ENCODE measurements at regions of chr15 and their contacts with region 1.

Region 1: DNA sequence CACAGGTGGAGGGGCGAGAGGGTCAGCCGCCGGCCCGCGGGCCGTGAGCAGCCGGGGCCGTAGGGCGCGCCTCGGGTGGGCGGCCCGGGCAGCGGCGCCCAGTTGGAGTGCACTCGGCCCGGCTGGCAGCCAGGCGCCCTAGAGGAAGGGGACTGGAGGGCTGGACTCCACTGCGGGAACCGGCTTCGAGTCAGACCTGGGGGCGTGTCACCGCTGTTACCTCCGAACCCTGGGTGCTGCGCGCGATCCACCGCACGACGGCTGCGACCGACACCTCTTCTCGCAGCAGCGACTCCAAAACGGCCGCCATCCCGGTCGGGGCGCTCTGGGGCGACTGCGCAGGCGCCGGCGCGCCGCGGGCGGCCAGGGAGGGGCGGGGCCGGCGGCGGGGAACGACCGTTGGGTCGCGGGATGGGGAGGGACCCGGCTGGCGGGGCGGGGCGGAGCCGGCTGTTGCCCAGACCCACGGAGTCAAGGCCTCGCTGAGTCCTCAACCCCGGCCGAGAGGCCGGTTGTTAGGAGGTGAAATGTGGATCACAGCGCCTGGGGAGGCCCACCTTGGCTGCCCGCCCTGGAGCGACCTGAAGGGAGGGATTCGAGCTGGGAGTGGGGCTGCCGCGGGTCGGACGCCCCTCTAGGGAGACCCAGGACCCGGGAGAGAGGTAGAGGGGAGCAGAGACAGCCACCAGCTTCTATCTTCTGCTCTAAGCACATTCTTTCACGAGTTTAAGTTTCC is at the start of gene CDAN1:
- DNase-seq: peak; percentile 88
- H3K4me3 Mint-ChIP-seq: peak within 1 kb of the TSS; percentile 77
- H3K27ac Mint-ChIP-seq: peak within 1 kb of the TSS; percentile 69
- H3K4me1 Mint-ChIP-seq: peaks cover 6% of the 10 kb centered on the region
- H3K27me3 Mint-ChIP-seq: no peaks in the 10 kb centered on the region
- total RNA-seq, gene CDAN1: 24.2 and 26.6 TPM in 2 replicates

Region 2: DNA sequence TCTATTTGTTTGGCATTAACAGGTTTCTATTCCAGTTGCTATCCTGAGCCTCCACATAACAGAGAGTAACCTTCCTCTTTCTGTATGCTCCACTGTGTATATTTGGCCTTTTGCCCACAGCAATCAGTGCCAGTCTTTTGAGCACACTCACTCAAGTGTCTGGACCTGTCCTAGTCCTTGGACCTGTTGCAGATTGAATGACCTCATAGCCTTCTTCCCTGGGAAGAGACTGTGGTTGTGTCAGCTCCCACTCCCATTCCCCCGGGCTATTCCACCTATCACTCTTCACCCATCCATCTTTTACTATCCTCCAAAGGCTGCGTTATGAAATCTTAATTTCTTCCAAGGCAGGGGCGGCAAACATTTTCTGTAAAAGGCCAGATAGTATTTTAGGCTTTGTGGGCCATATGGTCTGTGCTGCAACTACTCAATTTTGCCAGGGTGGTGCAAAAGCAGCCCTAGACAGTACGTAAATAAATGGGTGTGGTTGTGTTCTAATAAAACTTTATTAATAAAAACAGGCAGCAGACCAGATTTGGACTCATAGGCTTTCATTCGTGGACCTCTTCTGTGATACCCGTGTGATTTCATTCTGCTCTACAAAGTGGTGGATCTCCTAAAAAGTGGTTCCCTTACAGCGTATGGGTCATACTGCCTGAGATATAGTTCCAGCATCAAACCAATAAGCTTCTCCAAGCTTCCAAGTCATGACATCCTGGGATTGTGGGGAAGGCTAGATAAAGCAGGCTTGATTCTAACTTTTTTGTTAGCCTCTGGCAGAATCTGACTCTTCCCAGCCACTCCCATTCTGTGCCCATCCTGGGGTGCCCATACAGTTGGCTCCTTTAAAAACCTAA is 57.4 kb before region 1 on chr15:
- intact Hi-C with region 1: loop called (anchors 2 kb)
- DNase-seq: no peak
- H3K4me3 Mint-ChIP-seq: no peak overlapping the region
- H3K27ac Mint-ChIP-seq: no peak overlapping the region
- H3K4me1 Mint-ChIP-seq: peaks cover 28% of the 10 kb centered on the region
- H3K27me3 Mint-ChIP-seq: no peaks in the 10 kb centered on the region

Region 3: DNA sequence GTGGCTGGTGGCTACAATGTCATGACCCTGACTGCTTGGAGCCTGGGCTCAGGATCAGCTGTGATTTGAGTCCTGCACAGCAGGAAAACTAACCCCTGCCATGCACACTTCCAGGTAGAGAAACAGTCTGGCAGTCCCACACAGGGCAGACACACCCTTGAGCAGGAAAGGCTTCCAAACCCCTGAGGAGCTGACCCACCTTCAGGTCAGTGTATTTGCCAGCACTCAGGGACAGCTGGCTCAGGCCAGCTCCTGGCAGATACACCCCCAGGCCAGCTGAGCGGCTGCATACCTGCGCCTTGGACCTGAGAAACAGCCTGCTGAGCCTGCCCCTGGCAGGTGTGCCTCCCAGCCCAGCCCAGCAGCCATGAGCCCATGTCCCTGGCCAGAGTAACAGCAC is 22.1 kb after region 1 on chr15:
- intact Hi-C with region 1: no loop called
- DNase-seq: no peak
- H3K4me3 Mint-ChIP-seq: no peak overlapping the region
- H3K27ac Mint-ChIP-seq: no peak overlapping the region
- H3K4me1 Mint-ChIP-seq: no peaks in the 10 kb centered on the region
- H3K27me3 Mint-ChIP-seq: no peaks in the 10 kb centered on the region

Region 4: GRCh38 chr15:42920519-42921227 is 183.7 kb after region 1 on chr15 and contains the start of gene TTBK2:
- intact Hi-C with region 1: loop called (anchors 1 kb)
- DNase-seq: peak; percentile 96
- H3K4me3 Mint-ChIP-seq: peak within 1 kb of the TSS; percentile 93
- H3K27ac Mint-ChIP-seq: peak within 1 kb of the TSS; percentile 87
- H3K4me1 Mint-ChIP-seq: peaks cover 30% of the 10 kb centered on the region
- H3K27me3 Mint-ChIP-seq: no peaks in the 10 kb centered on the region
- total RNA-seq, gene TTBK2: 13.0 and 13.1 TPM in 2 replicates

Region 5: DNA sequence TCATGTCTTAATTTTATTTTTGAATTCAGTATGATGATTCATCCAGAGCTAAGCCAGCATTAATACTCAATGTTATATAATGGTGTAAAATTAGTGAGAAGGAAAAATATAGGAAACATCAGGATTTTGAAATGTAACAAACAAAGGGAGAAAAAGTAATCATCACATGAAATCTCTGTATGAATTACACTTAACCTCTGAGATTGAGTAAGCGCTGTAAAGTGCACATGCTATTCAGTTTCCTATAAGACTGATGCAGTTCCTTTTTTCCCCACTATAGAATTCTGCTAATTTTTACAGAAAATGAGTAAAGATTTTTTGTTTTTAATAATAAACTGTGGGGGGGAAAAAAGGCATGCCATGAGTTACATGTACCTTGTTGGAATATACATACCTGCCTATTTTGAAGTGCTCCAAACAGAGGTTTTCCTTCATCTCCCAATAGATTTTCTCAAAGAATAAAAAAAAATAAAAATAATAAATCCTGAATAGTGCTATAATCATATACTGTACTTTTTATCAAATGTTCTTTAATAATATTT is 247.6 kb after region 1 on chr15:
- intact Hi-C with region 1: no loop called
- DNase-seq: no peak
- H3K4me3 Mint-ChIP-seq: no peak overlapping the region
- H3K27ac Mint-ChIP-seq: no peak overlapping the region
- H3K4me1 Mint-ChIP-seq: no peaks in the 10 kb centered on the region
- H3K27me3 Mint-ChIP-seq: no peaks in the 10 kb centered on the region

Measured in activated T-helper 2 cell treated with anti-CD3 and anti-CD28 coated beads, Interferon-gamma antibody, Interleukin-2, Interleukin-4, amounts not matched to agents 10 μg/mL and 5 μg/mL and 100 μg/mL, durations not matched to agents 14 hours and 24 hours and 36 hours (primary cell).